CD4-positive, alpha-beta T cell (primary cell): ENCODE measurements at regions of chr14 and their contacts with region 1.

Region 1: DNA sequence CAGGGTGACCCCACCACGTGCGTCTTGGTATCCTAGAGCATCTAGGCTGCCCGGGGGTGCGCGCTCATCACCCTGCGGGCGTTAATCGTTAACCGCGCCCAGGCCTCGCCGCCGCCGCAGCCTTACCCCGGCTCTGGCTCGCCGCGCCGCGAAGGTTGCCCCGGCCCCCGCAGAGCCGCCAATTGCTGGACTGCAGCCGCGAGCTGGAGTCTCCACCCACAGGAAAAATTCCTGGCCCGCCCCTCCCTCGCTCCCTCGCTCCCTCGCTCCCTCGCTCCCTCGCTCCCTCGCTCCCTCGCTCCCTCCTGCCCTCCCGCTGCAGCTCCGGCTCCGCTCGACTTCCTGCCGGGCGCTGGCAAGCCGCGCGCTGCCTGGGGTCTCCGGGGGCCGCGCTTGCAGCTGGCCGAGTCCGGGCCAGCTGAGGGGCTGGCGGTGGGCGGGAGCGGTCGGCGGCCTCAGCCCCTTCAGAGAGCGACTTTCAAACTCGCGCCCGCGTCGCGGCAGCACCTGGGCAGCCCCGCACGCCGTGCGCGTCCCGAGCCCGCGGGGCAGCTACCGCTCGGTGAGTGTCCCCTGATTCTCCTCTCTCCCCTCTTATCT is at the start of gene PLEKHG3:
- DNase-seq: peak in 5 of 14 experiments; percentile 32 to 66 (median 46)
- ATAC-seq: peak; percentile 42
- H3K4me3 ChIP-seq: peak within 1 kb of the TSS; percentile 66
- H3K4me3 Mint-ChIP-seq: peak within 1 kb of the TSS; percentile 87
- H3K27ac ChIP-seq: peak within 1 kb of the TSS; percentile 53 to 63
- H3K27ac Mint-ChIP-seq: peak within 1 kb of the TSS; percentile 72
- H3K4me1 ChIP-seq: peaks cover 69% of the 10 kb centered on the region
- H3K4me1 Mint-ChIP-seq: peaks cover 50% of the 10 kb centered on the region
- H3K27me3 ChIP-seq: peaks cover 5 to 35% of the 10 kb centered on the region in 2 experiments
- H3K27me3 Mint-ChIP-seq: peaks cover 51% of the 10 kb centered on the region
- CTCF ChIP-seq: no peak
- total RNA-seq, gene PLEKHG3: 12.1 to 13.3 TPM

Region 2: GRCh38 chr14:64723691-64724577 is 19.7 kb after region 1 on chr14:
- CTCF ChIA-PET with region 1: no interaction called
- POLR2A ChIA-PET with region 1: interaction called, 18 read pairs
- intact Hi-C with region 1: loop called in 1 of 2 experiments (anchors 2 kb)
- DNase-seq: peak in 4 of 14 experiments; percentile 32 to 70 (median 62)
- ATAC-seq: peak; percentile 41
- H3K4me3 ChIP-seq: no peak overlapping the region
- H3K4me3 Mint-ChIP-seq: peak overlapping the region; percentile 69
- H3K27ac ChIP-seq: peak overlapping the region; percentile 22 to 73
- H3K27ac Mint-ChIP-seq: peak overlapping the region; percentile 82
- H3K4me1 ChIP-seq: peaks cover 100% of the 10 kb centered on the region
- H3K4me1 Mint-ChIP-seq: peaks cover 92% of the 10 kb centered on the region
- H3K27me3 ChIP-seq: no peaks in the 10 kb centered on the region
- H3K27me3 Mint-ChIP-seq: no peaks in the 10 kb centered on the region
- CTCF ChIP-seq: no peak

Region 3: GRCh38 chr14:64758691-64759584 is 54.7 kb after region 1 on chr14:
- CTCF ChIA-PET with region 1: interaction called, 4 read pairs
- POLR2A ChIA-PET with region 1: interaction called, 3 read pairs
- intact Hi-C with region 1: loop called in 1 of 2 experiments (anchors 5 kb)
- DNase-seq: no peak
- ATAC-seq: no peak
- H3K4me3 ChIP-seq: no peak overlapping the region
- H3K4me3 Mint-ChIP-seq: no peak overlapping the region
- H3K27ac ChIP-seq: peak overlapping the region in 1 of 2 donors; percentile 75
- H3K27ac Mint-ChIP-seq: peak overlapping the region; percentile 87
- H3K4me1 ChIP-seq: peaks cover 100% of the 10 kb centered on the region
- H3K4me1 Mint-ChIP-seq: peaks cover 61% of the 10 kb centered on the region
- H3K27me3 ChIP-seq: no peaks in the 10 kb centered on the region
- H3K27me3 Mint-ChIP-seq: no peaks in the 10 kb centered on the region
- CTCF ChIP-seq: no peak